Left cardiac atrium (tissue), 4 donors: ENCODE measurements at regions of chr7 and their contacts with region 1.

Region 1: DNA sequence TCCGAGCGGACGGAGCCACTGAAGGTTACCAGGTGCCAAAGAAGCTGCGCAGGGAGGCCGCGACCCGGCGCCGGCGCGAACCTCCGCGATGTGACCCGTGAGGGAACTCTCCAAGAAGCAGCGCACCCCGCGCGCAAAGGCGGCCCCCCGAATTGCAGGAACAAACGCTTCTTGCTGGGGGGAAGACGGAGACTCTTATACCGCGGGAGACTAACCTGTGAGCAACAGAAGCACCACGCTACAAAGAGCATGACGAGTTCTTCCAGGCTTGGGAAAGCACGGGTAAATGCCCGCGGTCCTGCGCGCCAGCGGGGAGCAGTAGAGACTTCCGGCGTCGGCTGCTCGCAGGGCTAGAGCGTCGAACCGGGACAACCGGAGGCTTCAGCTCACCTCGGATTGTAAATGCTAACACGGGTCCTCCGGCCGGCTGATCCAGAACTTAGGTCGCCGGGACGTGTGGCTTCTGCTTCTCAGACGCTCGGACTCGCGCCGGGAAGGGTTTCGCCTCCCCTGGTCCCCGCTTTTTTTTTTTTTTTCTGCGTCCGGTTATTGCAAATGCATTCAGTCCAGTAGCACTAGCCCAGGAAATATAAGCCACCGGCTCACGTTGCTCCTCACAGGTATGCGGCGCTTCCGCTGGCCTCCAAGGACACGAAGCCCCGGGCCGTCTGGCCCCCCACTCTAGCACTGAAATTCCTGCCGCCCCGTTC is at the start of gene COA1:
- DNase-seq: peak; percentile 90
- ATAC-seq: peak; percentile 99
- total RNA-seq, gene COA1: 52.7 to 55.4 TPM

Region 2: DNA sequence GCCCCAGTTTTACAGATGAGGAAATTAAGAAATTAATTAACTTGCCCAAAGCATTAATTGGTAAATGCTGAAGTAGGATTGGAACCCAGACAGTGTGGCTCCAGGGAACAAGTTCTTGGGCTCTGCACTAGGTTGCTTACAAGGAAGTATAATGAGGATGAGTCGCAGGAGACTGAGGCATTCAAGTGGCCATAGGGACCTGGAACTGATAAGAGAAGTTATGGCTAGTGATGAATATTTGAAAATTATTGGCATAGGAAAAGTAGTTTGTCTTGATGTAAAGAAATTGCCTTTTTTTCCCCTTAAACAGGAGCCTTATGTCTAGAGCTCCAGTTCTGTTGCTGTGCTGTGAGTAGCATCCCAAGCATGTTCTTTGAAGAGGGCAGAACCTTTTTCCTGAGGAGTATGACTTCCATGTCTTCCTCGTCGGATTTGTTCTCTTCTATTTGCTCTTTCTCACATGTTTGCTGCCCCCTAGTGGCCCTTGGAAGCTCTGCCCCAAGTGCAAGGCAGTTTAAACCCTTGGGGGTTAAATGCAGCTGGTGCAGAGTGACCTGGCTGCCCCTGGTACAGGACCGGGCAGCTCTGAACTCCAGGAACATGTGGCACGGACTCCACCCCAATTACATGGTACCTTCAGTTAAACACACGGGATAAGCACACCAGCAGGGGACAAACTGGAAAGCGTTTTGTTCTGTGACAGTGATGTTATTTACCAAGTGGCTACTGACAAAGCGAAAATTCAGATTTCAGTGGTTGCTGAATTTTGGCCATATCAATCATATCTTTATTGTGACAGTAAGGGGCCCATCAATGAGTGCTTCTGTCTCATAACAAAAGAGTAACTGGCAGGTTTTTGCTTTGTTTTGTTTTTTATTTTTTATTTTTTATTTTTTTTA is 468.1 kb before region 1 on chr7:
- intact Hi-C with region 1: loop called in 1 of 2 experiments (anchors 10 kb)
- DNase-seq: peak; percentile 71
- ATAC-seq: peak; percentile 63 to 77

Region 3: DNA sequence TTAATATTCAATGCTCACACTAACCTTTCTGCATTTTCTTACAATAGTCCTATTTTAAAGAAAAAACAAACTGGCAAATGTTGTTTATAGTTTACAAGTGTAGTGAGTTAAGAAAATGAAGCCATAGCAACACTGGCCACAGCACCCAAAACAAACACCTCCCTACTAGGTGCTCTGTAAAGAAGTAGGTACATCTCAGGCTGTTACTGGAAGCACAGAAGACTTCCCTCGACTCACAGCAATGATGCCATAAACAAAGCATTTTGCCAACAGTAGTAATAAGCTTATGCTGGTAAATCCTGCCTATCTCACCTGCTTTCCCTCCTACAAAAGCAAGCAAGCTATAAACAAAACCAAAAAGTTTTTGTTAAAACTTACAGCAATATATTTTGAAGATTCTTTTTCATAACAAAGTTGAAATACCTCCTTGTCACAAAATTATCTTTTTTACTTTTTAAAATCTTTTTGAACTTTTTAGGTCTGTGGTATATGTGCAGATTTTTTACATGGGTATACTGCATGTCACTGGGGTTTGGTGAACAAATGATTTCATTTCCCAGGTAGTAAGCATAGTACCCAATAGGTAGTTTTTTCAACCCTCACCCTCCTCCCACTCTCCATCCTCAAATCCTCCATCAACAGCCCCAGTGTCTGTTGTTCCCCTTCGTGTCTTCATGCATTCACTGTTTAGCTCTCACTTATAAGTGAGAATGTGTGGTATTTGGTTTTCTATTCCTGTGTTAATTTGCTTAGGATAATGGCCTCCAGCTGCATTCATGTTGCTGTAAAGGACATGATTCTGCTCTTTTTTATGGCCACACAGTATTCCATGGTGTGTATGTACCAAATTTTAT is 28.5 kb before region 1 on chr7:
- intact Hi-C with region 1: no loop called
- DNase-seq: no peak
- ATAC-seq: no peak

Region 4: DNA sequence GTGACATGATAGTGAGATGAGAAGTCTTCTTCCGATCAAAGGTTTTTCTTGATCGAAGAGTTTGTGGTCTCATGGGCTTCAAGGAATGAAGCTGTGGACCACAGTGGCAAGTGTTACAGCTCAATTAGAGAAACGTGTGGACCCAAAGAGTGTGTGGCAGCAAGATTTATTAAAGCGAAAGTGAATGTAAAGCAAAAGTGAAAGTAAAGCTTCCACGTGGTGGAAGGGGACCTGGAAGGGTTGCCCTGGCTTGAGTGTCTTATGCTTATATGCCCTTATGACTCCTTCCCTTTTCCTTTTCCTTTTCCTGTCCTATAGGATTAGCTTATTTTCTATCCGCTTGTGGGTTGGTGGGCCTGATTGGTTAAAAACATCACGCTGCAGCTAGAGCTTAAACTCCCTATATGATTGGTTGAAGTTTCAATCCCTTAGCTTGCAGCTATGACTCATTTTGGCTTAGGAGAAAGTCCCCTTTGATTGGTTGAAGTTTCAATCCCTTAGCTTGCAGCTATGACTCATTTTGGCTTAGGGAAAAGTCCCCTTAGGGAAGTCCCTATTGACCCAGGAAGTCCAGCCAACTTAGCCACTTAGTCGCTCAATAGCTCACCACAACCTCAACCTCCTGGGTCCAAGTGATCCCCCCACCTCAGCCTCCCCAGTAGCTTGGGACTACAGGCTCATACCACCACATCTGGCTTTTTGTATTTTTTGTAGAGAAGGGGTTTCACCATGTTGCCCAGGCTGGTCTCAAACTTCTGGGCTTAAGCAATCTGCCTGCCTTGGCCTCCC is 105.3 kb after region 1 on chr7:
- intact Hi-C with region 1: loop called (anchors 10 kb)
- DNase-seq: no peak
- ATAC-seq: no peak